Ascending aorta (tissue), 2 donors: ENCODE measurements at regions of chr11 and their contacts with region 1.

Region 1: DNA sequence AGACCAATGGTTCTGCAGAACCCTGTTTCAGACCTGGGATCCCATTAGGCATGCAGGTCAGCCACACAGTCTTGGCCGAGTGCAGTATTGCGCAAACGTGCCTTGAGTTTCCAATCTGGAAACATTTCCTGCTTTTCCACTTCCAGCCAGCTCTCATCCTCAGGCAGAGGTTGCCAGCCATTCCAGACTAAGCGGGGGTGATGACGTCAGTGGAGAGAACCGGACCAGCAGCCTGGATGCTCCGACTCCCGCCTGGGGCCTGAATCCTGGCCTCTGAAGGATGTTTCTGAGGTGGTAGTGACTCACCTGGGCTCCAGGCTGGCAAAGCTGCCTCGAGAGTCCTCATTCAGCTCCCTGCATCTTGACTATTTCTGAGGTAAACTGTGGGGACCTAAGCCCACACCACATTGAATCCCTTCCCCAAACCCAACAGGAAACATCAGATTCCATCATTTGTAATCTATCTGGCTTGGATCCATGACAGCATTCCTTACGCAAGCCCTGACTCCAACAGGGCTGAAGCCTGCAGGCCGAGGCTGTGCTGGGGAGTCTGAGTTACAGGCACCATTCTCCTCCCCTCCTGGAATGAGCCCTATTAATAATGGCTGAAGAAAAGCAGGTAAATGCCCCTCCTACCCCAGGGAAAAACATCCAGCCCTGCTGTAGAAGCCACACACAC is 82.9 kb downstream of the ABTB2 start:
- DNase-seq: peak; percentile 71 to 97
- H3K4me3 ChIP-seq: no peak overlapping the region
- H3K27ac ChIP-seq: peak overlapping the region; percentile 76 to 80
- H3K4me1 ChIP-seq: peaks cover 4 to 13% of the 10 kb centered on the region in 2 donors
- H3K27me3 ChIP-seq: no peaks in the 10 kb centered on the region
- CTCF ChIP-seq: no peak

Region 2: DNA sequence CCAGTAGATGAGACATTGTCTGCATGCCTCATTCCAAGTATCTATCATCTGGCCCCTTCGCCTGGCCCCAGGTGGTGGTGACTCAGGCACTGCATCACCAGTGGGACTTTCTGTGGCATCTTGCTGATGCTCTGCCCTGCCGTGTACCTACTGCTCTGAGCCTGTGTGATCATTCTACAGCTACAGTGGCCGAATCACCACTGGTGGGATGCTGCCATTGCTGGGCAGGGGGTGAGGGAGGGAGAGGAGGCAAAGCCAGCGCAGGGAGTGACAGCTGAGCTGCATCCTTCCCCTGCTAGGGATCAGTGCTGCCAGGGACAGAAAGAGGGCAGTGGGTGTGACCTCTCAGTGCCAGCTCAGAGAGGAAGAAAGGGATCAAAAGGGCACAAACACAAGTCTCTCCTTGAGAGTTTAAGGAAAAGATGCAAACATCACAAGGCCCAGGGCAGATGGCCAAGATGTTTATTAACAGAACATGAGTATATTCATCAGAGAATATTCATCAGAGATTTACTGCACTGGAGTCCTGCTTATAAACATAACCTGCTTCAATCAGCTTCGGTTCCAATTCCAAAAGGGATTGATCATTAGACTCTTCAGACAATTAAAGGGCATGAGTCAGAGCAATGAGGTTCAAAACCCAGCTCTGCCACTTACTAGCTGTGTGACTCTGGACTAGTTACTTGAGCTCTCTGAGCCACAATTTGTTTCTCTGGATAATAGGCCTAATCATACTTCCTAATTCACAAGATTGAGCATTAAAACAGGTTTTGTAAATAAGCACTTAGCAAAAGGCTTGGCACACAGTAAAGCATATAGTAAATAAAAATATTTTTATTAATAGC is 59.7 kb before region 1 on chr11:
- intact Hi-C with region 1: no loop called
- DNase-seq: no peak
- H3K4me3 ChIP-seq: no peak overlapping the region
- H3K27ac ChIP-seq: no peak overlapping the region
- H3K4me1 ChIP-seq: peaks cover 0 to 2% of the 10 kb centered on the region in 2 donors
- H3K27me3 ChIP-seq: no peaks in the 10 kb centered on the region
- CTCF ChIP-seq: no peak

Region 3: GRCh38 chr11:34226210-34226609 is 48.7 kb before region 1 on chr11:
- intact Hi-C with region 1: no loop called
- DNase-seq: no peak
- H3K4me3 ChIP-seq: no peak overlapping the region
- H3K27ac ChIP-seq: no peak overlapping the region
- H3K4me1 ChIP-seq: peaks cover 5 to 13% of the 10 kb centered on the region in 2 donors
- H3K27me3 ChIP-seq: no peaks in the 10 kb centered on the region
- CTCF ChIP-seq: no peak

Region 4: GRCh38 chr11:34250732-34251639 is 23.9 kb before region 1 on chr11:
- intact Hi-C with region 1: loop called (anchors 2 kb)
- DNase-seq: peak; percentile 37 to 87
- H3K4me3 ChIP-seq: peak overlapping the region; percentile 11 to 50
- H3K27ac ChIP-seq: peak overlapping the region; percentile 78 to 86
- H3K4me1 ChIP-seq: peaks cover 3 to 11% of the 10 kb centered on the region in 2 donors
- H3K27me3 ChIP-seq: no peaks in the 10 kb centered on the region
- CTCF ChIP-seq: no peak

Region 5: GRCh38 chr11:34308913-34309585 is 34.2 kb after region 1 on chr11:
- intact Hi-C with region 1: loop called (anchors 2 kb)
- DNase-seq: no peak
- H3K4me3 ChIP-seq: no peak overlapping the region
- H3K27ac ChIP-seq: peak overlapping the region in 1 of 2 donors; percentile 41
- H3K4me1 ChIP-seq: peaks cover 3 to 10% of the 10 kb centered on the region in 2 donors
- H3K27me3 ChIP-seq: no peaks in the 10 kb centered on the region
- CTCF ChIP-seq: no peak

Region 6: GRCh38 chr11:34345991-34346480 is 71.2 kb after region 1 on chr11:
- intact Hi-C with region 1: loop called (anchors 2 kb)
- DNase-seq: peak; percentile 47 to 85
- H3K4me3 ChIP-seq: peak overlapping the region in 1 of 2 donors; percentile 27
- H3K27ac ChIP-seq: peak overlapping the region; percentile 78 to 94
- H3K4me1 ChIP-seq: peaks cover 15 to 76% of the 10 kb centered on the region in 2 donors
- H3K27me3 ChIP-seq: no peaks in the 10 kb centered on the region
- CTCF ChIP-seq: no peak